ENCODE measurements at regions of chr7 and their contacts with region 1.

Region 1: DNA sequence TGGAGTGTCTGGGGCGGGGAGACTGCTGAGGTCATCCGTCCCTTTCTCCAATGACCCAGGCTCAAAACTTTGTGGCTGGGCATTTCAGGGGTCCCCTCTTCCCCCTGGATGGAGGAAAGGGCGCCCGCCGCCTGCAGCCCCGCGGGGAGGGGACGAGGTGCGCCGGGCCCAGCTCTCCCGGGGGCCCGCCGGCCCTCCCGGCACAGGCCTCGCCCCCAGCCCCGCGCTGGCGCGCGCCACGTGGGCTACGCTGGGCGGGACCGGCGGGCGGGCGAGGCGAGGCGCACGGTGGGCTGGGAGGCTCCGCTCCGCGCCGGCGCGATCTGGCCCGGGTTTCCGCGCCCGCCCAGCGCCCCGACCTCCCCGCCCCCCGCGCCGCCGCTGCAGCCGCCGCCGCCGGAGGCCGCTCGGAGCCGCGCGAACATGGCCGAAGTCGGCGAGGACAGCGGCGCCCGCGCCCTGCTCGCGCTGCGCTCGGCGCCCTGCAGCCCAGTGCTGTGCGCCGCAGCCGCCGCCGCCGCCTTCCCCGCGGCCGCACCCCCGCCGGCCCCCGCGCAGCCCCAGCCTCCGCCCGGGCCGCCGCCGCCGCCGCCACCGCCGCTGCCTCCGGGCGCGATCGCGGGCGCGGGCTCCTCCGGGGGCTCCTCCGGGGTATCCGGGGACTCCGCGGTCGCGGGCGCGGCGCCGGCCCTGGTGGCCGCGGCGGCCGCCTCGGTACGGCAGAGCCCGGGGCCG is at the start of gene FOXK1:
- DNase-seq: no peak
- ATAC-seq: peak; percentile 89
- H3K4me3 ChIP-seq: peak within 1 kb of the TSS; percentile 69 to 90
- H3K27ac ChIP-seq: peak within 1 kb of the TSS; percentile 89
- H3K4me1 ChIP-seq: peaks cover 14% of the 10 kb centered on the region
- H3K27me3 ChIP-seq: no peaks in the 10 kb centered on the region
- CTCF ChIP-seq: no peak
- total RNA-seq, gene FOXK1: 72.7 TPM

Region 2: DNA sequence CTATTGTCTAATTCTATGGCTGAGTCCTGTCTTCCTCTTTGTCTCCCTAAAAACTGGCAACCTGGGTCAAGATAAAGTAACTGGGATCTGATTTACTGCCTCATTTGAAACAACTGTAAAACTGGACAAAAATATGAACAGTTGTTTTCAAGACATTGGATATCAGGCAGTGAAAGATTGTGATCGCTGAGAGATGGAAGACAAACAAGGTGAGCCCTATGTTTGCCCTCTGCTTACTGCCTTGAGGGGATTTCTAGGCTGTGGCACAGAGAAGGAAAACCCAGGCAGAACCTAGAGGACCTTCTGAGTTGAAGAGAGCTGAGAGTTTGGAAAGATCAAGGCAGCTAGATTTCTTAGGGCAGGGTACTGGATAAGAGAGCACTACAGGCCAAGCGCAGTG is 1053.4 kb before region 1 on chr7:
- CTCF ChIA-PET with region 1: interaction called, 10 read pairs
- POLR2A ChIA-PET with region 1: no interaction called
- in situ Hi-C with region 1: no loop called
- intact Hi-C with region 1: no loop called
- DNase-seq: no peak
- ATAC-seq: no peak
- H3K4me3 ChIP-seq: no peak overlapping the region
- H3K27ac ChIP-seq: no peak overlapping the region; the same call in 1 of the 2 replicates
- H3K4me1 ChIP-seq: no peaks in the 10 kb centered on the region
- H3K27me3 ChIP-seq: no peaks in the 10 kb centered on the region
- CTCF ChIP-seq: no peak

Region 3: GRCh38 chr7:4386190-4386589 is 295.9 kb before region 1 on chr7:
- CTCF ChIA-PET with region 1: no interaction called
- POLR2A ChIA-PET with region 1: no interaction called
- in situ Hi-C with region 1: no loop called
- intact Hi-C with region 1: no loop called
- DNase-seq: no peak
- ATAC-seq: no peak
- H3K4me3 ChIP-seq: no peak overlapping the region
- H3K27ac ChIP-seq: no peak overlapping the region
- H3K4me1 ChIP-seq: no peaks in the 10 kb centered on the region
- H3K27me3 ChIP-seq: peaks cover 7% of the 10 kb centered on the region
- CTCF ChIP-seq: no peak

Region 4: GRCh38 chr7:4549681-4550080 is 132.4 kb before region 1 on chr7:
- CTCF ChIA-PET with region 1: no interaction called
- POLR2A ChIA-PET with region 1: no interaction called
- in situ Hi-C with region 1: no loop called
- intact Hi-C with region 1: no loop called
- DNase-seq: no peak
- ATAC-seq: no peak
- H3K4me3 ChIP-seq: no peak overlapping the region
- H3K27ac ChIP-seq: no peak overlapping the region
- H3K4me1 ChIP-seq: no peaks in the 10 kb centered on the region
- H3K27me3 ChIP-seq: 0 out of 2 replicates have a peak, but pooled peaks cover 4% of the 10 kb centered on the region
- CTCF ChIP-seq: no peak

Region 5: GRCh38 chr7:4631664-4632171 is 50.3 kb before region 1 on chr7:
- CTCF ChIA-PET with region 1: interaction called, 13 read pairs
- POLR2A ChIA-PET with region 1: no interaction called
- in situ Hi-C with region 1: no loop called
- intact Hi-C with region 1: no loop called
- DNase-seq: peak; percentile 94
- ATAC-seq: peak; percentile 95
- H3K4me3 ChIP-seq: peak overlapping the region; percentile 30 to 70
- H3K27ac ChIP-seq: peak overlapping the region; percentile 67
- H3K4me1 ChIP-seq: peaks cover 16% of the 10 kb centered on the region
- H3K27me3 ChIP-seq: no peaks in the 10 kb centered on the region
- CTCF ChIP-seq: peak; percentile 86

Region 6: GRCh38 chr7:4641667-4642467 is 40.2 kb before region 1 on chr7:
- CTCF ChIA-PET with region 1: interaction called, 6 read pairs
- POLR2A ChIA-PET with region 1: interaction called, 5 read pairs
- in situ Hi-C with region 1: no loop called
- intact Hi-C with region 1: loop called (anchors 2 kb)
- DNase-seq: peak; percentile 80
- ATAC-seq: peak; percentile 96
- H3K4me3 ChIP-seq: peak overlapping the region; percentile 63 to 90
- H3K27ac ChIP-seq: peak overlapping the region; percentile 88
- H3K4me1 ChIP-seq: peaks cover 15% of the 10 kb centered on the region
- H3K27me3 ChIP-seq: no peaks in the 10 kb centered on the region
- CTCF ChIP-seq: peak; percentile 90; the same call in 1 of the 2 replicates

Region 7: GRCh38 chr7:4665661-4666060 is 16.4 kb before region 1 on chr7:
- CTCF ChIA-PET with region 1: no interaction called
- POLR2A ChIA-PET with region 1: interaction called, 12 read pairs
- in situ Hi-C with region 1: no loop called
- intact Hi-C with region 1: no loop called
- DNase-seq: no peak
- ATAC-seq: no peak
- H3K4me3 ChIP-seq: no peak overlapping the region
- H3K27ac ChIP-seq: 0 out of 2 replicates have a peak overlapping the region, but pooled peaks have one; percentile 6
- H3K4me1 ChIP-seq: no peaks in the 10 kb centered on the region
- H3K27me3 ChIP-seq: no peaks in the 10 kb centered on the region
- CTCF ChIP-seq: no peak

Region 8: DNA sequence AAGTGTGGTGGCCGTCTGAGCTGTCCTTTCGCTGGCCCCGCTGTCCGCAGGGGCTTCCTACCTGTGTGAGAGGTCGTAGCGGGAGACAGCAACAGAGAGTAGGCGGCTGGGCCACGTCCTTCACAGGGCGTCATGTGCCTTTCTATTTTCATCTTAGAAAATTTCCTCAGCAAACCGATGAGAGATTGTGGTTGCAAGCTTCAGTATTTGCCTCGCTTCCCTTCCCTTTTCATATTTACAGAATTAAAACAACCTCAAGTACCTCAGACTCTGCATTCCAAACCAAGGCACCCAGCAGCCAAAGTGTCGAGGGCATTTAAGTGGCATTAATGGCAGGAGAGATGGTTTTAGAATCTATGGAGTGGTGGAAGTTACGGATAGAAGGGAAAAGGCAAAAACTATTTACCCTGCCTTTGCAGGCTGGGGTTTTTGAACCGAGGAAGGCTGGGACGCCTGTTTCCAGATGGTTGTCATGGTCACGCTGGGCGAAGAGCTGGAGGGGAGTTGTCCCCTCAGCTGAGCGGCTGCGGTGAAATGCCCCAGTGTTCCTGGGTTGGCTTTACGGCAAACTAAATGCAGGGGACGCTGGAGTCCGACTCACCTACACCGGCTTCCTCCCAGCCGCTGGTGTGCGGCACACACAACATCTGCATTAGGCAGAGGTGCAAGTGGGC is 549.9 kb after region 1 on chr7:
- CTCF ChIA-PET with region 1: interaction called, 24 read pairs
- POLR2A ChIA-PET with region 1: no interaction called
- in situ Hi-C with region 1: no loop called
- intact Hi-C with region 1: no loop called
- DNase-seq: no peak
- ATAC-seq: no peak
- H3K4me3 ChIP-seq: no peak overlapping the region
- H3K27ac ChIP-seq: no peak overlapping the region
- H3K4me1 ChIP-seq: no peaks in the 10 kb centered on the region
- H3K27me3 ChIP-seq: no peaks in the 10 kb centered on the region
- CTCF ChIP-seq: no peak

Measured in Panc1 (cell line).